ENCODE measurements at regions of chr2 and their contacts with region 1.

Region 1: DNA sequence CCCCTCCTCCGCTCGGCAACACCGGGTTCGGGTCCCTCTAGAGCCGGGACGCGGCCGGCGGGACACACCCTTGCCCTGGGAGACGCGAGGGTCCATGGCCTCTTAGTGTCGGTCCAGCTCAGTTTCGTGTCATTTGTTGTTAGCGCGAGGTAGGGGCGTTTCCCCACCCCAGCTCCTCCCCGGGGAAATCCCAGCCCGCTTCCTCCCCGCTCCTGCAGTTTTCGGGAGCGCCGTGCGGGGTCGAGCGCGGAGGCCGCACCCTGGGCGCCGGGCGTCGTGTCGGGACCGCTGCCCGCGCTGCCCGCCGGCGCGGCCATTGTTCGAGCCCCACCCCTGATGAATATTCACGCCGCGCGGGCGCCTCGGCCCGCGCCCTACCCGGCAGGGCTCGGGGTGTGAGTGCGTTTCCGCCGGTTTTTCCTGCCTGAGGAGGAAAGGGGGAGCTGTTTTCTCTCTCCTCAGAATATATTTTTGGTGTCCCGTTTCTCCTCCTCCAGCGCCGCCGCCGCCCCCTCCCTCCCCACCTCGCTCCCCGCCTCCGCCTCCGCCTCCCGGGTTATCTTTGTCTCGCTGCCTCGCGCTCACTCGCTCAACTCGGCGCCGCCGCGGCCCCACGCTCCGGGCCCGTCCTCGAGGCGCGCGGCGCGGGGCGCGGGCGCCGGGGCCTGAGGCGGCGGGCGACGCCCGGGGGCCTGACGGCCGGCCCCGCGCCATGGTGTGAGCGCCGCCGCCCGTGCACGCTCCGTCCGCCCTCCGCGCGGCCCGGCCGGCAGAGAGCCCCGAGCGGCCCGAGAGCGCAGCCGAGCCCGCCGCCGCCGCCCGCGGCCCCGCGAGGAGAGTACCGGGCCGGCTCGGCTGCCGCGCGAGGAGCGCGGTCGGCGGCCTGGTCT is at the start of gene MAP4K4:
- DNase-seq: peak; percentile 86 to 87
- H3K4me3 ChIP-seq: peak within 1 kb of the TSS; percentile 47
- H3K4me3 Mint-ChIP-seq: no peak within 1 kb of the TSS
- H3K27ac Mint-ChIP-seq: peak within 1 kb of the TSS; percentile 82
- H3K4me1 ChIP-seq: peaks cover 27% of the 10 kb centered on the region
- H3K4me1 Mint-ChIP-seq: peaks cover 17% of the 10 kb centered on the region
- H3K27me3 ChIP-seq: no peaks in the 10 kb centered on the region
- H3K27me3 Mint-ChIP-seq: no peaks in the 10 kb centered on the region
- CTCF ChIP-seq: peak in 1 of 2 experiments; percentile 25
- total RNA-seq, gene MAP4K4: 257 and 263 TPM in 2 replicates

Region 2: DNA sequence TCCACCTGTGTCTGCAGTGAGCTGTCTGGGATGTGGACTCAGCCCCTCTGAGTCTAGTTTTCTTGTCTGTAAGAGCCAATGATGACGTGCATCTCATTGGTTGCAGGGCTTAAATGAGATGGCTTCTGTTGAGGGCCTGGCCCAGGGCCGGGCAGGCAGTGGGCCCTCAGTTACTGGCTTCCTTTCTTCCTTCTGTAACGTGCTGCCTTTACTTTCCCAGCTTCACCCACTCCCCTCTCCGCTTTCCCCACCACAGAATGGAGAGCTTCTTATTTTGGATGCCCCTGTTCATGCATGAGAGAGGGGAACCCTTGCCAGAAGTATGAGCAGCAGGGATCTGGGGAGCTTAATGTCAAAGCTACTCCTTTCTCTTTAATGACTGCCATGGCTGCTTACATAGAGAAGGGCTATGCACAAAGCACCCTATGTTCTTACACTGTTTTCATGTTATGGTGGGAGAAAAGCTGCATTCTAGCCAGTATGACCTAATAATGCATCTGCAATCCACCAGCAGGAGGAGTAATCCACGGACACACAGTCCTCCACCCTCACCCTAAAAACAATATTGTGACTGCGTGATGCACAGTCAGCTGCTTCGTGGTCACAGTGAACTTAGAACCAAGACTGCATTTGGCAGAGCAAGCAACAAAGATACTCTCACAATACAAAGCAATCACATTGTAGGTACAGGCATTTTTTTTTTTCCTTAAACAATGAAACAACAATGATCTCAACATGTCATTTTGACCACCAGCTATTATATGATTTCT is 347.3 kb before region 1 on chr2:
- CTCF ChIA-PET with region 1: no interaction called
- POLR2A ChIA-PET with region 1: no interaction called
- intact Hi-C with region 1: loop called (anchors 5 kb)
- DNase-seq: no peak
- H3K4me3 ChIP-seq: no peak overlapping the region
- H3K4me3 Mint-ChIP-seq: no peak overlapping the region
- H3K27ac Mint-ChIP-seq: peak overlapping the region; percentile 80
- H3K4me1 ChIP-seq: peaks cover 44% of the 10 kb centered on the region
- H3K4me1 Mint-ChIP-seq: peaks cover 38% of the 10 kb centered on the region
- H3K27me3 ChIP-seq: no peaks in the 10 kb centered on the region
- H3K27me3 Mint-ChIP-seq: no peaks in the 10 kb centered on the region
- CTCF ChIP-seq: peak; percentile 32 to 53

Region 3: GRCh38 chr2:101597351-101597944 is 99.9 kb before region 1 on chr2:
- CTCF ChIA-PET with region 1: interaction called, 5 read pairs
- POLR2A ChIA-PET with region 1: interaction called, 7 read pairs
- intact Hi-C with region 1: loop called (anchors 2 kb)
- DNase-seq: peak; percentile 69 to 77
- H3K4me3 ChIP-seq: no peak overlapping the region
- H3K4me3 Mint-ChIP-seq: peak overlapping the region; percentile 10
- H3K27ac Mint-ChIP-seq: peak overlapping the region; percentile 37
- H3K4me1 ChIP-seq: peaks cover 20% of the 10 kb centered on the region
- H3K4me1 Mint-ChIP-seq: peaks cover 34% of the 10 kb centered on the region
- H3K27me3 ChIP-seq: no peaks in the 10 kb centered on the region
- H3K27me3 Mint-ChIP-seq: no peaks in the 10 kb centered on the region
- CTCF ChIP-seq: no peak

Region 4: DNA sequence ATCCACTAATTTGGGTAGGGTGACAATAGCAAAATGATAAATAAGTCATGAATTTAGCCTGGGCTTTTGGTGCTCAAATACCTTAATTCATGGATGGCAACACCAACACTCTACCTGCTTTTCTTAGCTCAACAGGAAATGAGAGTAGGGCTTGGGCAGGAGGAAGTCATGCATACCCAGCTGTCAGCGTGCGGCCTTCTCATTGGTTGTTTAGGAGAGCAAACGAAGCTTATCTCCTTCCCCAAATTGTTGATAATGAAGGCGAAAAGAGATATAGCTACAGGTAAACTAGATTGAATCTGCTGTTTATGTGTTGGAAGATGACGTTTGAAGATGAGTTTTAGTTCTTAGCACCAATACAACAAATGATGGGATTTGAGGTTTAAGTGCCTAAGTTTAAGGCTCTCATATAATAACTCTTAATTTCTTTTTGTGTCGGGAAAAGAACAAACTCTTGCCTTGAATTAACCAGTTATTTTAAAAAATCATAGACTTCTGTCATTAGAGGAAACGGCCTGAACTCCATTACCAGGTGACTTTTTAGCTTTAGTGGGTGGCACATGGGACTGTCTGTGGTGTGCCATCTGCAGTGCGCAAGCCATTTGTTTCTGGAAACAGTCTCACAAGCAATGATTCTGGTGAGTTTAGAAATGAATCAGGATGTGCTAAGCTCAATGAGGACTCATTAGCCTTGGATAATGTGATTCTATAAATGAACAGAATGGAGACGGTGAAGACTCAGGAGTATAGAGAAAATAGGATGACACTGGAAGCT is 19.9 kb after region 1 on chr2:
- CTCF ChIA-PET with region 1: no interaction called
- POLR2A ChIA-PET with region 1: no interaction called
- intact Hi-C with region 1: no loop called
- DNase-seq: no peak
- H3K4me3 ChIP-seq: no peak overlapping the region
- H3K4me3 Mint-ChIP-seq: no peak overlapping the region
- H3K27ac Mint-ChIP-seq: no peak overlapping the region
- H3K4me1 ChIP-seq: peaks cover 8% of the 10 kb centered on the region; the same call in 1 of the 2 replicates
- H3K4me1 Mint-ChIP-seq: peaks cover 40% of the 10 kb centered on the region
- H3K27me3 ChIP-seq: no peaks in the 10 kb centered on the region
- H3K27me3 Mint-ChIP-seq: no peaks in the 10 kb centered on the region
- CTCF ChIP-seq: no peak

Region 5: DNA sequence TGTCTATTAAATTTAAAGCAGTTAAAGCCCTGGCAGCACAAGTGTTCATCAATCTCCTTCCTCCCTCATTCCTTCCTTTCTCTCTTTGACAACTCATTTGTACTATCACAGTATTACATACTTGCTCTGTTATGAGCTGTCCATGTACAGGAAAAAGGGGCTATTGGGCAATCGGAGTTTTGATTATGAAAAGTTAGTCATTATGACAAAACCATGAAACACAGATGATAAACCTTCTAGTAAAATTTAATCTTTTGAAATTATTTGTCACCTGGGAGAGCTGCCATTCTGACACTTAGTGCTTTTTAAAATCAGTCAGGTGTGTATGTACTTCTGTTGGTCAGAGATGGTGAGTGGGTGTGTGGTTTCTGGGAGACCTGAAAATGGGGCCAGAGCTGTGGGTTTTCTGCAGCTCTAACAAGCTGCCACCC is 39.5 kb after region 1 on chr2:
- CTCF ChIA-PET with region 1: no interaction called
- POLR2A ChIA-PET with region 1: no interaction called
- intact Hi-C with region 1: no loop called
- DNase-seq: no peak
- H3K4me3 ChIP-seq: no peak overlapping the region
- H3K4me3 Mint-ChIP-seq: no peak overlapping the region
- H3K27ac Mint-ChIP-seq: no peak overlapping the region
- H3K4me1 ChIP-seq: peaks cover 68% of the 10 kb centered on the region
- H3K4me1 Mint-ChIP-seq: peaks cover 51% of the 10 kb centered on the region
- H3K27me3 ChIP-seq: no peaks in the 10 kb centered on the region
- H3K27me3 Mint-ChIP-seq: no peaks in the 10 kb centered on the region
- CTCF ChIP-seq: no peak

Region 6: DNA sequence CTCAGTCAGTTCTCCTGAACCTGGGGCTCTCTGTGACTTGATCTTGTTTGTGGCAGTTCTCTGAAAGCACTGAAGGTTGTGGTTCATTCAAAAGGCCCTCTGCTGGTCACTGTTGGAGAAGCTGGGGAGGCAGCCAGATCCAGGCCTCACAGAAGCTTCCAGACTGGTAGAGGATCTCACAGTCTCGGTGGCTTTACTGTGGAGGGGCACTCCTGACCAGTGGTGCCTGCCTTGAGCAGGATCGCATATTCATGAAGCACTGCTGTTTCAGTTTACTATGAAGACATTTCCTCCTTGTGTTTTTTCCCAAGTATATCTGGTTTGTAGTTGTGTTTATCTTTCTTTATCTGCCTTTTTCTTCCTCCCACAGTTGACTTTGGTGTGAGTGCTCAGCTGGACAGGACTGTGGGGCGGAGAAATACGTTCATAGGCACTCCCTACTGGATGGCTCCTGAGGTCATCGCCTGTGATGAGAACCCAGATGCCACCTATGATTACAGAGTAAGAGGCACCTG is 134.0 kb after region 1 on chr2:
- CTCF ChIA-PET with region 1: interaction called, 6 read pairs
- POLR2A ChIA-PET with region 1: interaction called, 4 read pairs
- intact Hi-C with region 1: loop called (anchors 2 kb)
- DNase-seq: peak; percentile 80
- H3K4me3 ChIP-seq: no peak overlapping the region
- H3K4me3 Mint-ChIP-seq: no peak overlapping the region
- H3K27ac Mint-ChIP-seq: peak overlapping the region; percentile 66
- H3K4me1 ChIP-seq: peaks cover 33% of the 10 kb centered on the region
- H3K4me1 Mint-ChIP-seq: peaks cover 41% of the 10 kb centered on the region
- H3K27me3 ChIP-seq: no peaks in the 10 kb centered on the region
- H3K27me3 Mint-ChIP-seq: no peaks in the 10 kb centered on the region
- CTCF ChIP-seq: peak; percentile 64 to 90